ENCODE measurements at regions of chr16 and their contacts with region 1.

Region 1: DNA sequence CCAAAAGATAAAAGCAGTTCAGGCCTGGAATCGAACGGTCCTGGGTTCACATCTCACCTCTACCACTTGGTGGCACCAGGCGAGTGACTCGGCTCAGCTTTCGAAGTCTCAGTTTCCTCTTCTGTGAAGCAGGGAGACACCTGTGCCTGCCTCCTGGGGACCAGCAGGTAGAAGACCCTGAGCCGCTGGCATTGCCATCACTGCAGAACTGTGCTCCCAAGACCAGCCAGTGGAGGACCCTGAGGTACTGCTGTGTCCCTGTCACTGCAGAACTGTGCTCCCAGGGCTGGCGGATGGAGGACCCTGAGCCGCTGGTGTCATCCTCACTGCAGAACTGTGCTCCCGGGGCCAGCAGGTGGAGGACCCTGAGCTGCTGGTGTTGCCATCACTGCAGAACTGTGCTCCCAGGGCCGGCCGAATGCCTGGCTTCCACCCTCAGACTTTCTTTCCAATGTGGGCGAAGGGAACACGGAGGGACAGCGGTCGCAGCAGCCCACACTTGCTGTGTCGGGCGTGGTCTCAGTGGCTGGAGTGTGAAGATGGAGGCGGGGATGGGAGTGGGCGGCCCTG is 8.7 kb upstream of the SLC7A5 start:
- DNase-seq: no peak
- H3K4me3 ChIP-seq: no peak overlapping the region
- H3K27ac ChIP-seq: no peak overlapping the region
- H3K4me1 ChIP-seq: no peaks in the 10 kb centered on the region
- H3K27me3 ChIP-seq: peaks cover 0 to 65% of the 10 kb centered on the region in 2 donors
- CTCF ChIP-seq: no peak

Region 2: GRCh38 chr16:87844120-87844733 is 33.8 kb before region 1 on chr16:
- intact Hi-C with region 1: loop called (anchors 5 kb)
- DNase-seq: no peak
- H3K4me3 ChIP-seq: no peak overlapping the region
- H3K27ac ChIP-seq: no peak overlapping the region
- H3K4me1 ChIP-seq: peaks cover 0 to 4% (median 0%) of the 10 kb centered on the region in 4 donors
- H3K27me3 ChIP-seq: peaks cover 0 to 3% of the 10 kb centered on the region in 2 donors
- CTCF ChIP-seq: no peak

Measured in tibial artery (tissue), 4 donors.